ENCODE measurements at regions of chr1 and their contacts with region 1.

Region 1: DNA sequence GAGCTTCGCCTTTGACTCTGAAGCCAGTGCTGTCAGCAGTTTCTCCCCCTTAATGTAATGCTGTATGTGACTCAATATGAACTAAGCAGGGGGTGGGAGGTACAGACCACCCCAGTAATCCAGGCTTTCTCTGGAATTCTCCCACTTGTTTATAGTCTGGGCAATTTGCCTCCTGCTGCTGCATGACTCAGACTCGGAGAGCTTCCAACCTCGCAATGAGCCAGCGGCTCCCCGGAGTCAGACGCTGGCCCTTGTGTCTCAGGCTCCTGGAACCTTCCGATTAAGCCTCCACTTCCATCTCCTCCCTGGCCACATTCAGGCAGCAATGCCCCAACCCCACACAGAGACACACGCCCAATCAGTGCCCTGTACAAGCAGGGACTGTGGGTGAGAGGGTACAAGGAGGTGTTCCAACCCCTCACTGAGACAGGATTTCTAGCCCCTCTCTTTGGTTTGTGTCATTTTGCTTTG is 471.7 kb upstream of the VAMP3 start:
- DNase-seq: peak; percentile 70
- H3K4me3 ChIP-seq: no peak overlapping the region
- H3K27ac ChIP-seq: no peak overlapping the region
- H3K4me1 ChIP-seq: peaks cover 15% of the 10 kb centered on the region
- H3K27me3 ChIP-seq: no peaks in the 10 kb centered on the region
- CTCF ChIP-seq: no peak

Region 2: DNA sequence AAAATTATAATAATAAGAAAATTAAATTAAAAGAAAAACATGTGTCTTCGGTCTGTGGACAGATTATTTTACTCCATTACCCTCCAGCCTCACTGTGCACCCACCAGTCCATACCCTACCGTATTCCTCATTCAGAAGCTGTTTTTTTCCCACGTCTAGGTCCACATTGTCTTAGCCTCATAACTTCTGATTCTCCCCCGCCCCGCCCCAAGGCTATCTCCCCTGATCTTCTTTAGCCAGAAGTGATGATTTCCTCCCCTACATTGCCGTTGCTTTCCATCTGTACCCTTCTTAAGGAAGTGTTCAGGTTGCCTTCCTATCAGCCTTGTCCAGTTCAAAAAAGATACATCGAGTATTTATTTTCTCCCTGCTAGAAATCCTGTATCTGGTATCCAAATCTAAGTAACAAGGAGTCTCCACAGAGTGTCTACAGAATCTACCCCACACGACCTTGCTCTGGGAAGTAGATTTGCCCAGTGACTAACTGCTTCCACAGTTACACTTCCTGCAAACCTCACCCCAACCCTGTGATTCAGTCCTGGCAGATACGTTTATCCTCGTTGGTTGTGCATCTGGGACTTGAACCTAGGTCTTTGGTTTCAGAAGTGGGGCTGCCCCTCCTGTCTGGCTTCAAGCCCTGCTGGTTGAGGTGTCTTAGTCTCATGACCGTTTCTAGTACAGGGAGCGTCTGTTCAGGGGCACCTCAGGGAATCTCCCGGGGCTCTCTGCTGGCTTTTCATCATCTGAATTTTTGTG is 43.9 kb before region 1 on chr1:
- CTCF ChIA-PET with region 1: no interaction called
- dilution Hi-C with region 1: loop called (anchors 5 kb)
- in situ Hi-C with region 1: no loop called
- intact Hi-C with region 1: no loop called
- DNase-seq: no peak
- H3K4me3 ChIP-seq: no peak overlapping the region
- H3K27ac ChIP-seq: no peak overlapping the region
- H3K4me1 ChIP-seq: no peaks in the 10 kb centered on the region
- H3K27me3 ChIP-seq: no peaks in the 10 kb centered on the region
- CTCF ChIP-seq: no peak

Region 3: GRCh38 chr1:7281821-7282220 is 17.5 kb before region 1 on chr1:
- CTCF ChIA-PET with region 1: no interaction called
- dilution Hi-C with region 1: no loop called
- in situ Hi-C with region 1: no loop called
- intact Hi-C with region 1: no loop called
- DNase-seq: peak; percentile 50
- H3K4me3 ChIP-seq: no peak overlapping the region
- H3K27ac ChIP-seq: no peak overlapping the region
- H3K4me1 ChIP-seq: peaks cover 11% of the 10 kb centered on the region
- H3K27me3 ChIP-seq: no peaks in the 10 kb centered on the region
- CTCF ChIP-seq: no peak

Region 4: GRCh38 chr1:7334475-7335035 is 35.2 kb after region 1 on chr1:
- CTCF ChIA-PET with region 1: no interaction called
- dilution Hi-C with region 1: loop called (anchors 5 kb)
- in situ Hi-C with region 1: no loop called
- intact Hi-C with region 1: no loop called
- DNase-seq: peak; percentile 88
- H3K4me3 ChIP-seq: no peak overlapping the region
- H3K27ac ChIP-seq: no peak overlapping the region
- H3K4me1 ChIP-seq: peaks cover 21% of the 10 kb centered on the region
- H3K27me3 ChIP-seq: no peaks in the 10 kb centered on the region
- CTCF ChIP-seq: no peak

Region 5: DNA sequence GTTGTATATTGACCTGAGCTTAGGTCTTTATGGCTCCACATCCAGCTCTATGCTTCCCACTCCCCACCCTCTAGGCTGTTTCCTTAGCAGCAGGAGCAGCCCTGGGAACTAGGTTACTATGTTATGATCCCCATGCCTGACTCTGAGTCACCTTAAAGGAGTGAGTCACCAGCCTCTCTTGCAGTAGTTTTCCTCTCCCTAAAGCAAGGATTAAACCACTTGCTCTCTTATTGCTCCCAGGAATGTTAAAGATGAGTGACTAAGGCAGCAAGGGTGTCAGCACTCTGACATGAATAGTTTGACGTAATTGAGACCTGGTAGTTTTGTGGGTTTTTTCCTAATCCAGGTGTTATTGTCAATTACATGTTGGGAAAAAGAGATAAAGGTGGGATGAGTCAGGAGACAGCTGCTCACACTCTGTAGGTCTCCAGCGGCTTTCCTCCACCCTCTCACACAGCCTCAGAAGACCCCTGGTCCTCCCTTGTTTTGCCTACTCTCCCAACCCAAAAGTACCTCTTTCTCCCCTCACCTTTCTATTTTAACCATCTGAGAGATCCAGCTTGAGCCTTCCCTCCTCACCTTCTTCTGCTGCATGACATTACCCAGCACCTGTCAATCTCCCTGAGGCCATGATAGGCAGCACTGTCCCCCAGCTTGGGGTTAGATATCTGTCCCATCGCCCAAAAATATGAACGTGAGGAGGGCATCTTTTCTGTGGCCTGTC is 102.6 kb after region 1 on chr1:
- CTCF ChIA-PET with region 1: no interaction called
- dilution Hi-C with region 1: no loop called
- in situ Hi-C with region 1: no loop called
- intact Hi-C with region 1: no loop called
- DNase-seq: peak; percentile 99
- H3K4me3 ChIP-seq: no peak overlapping the region
- H3K27ac ChIP-seq: peak overlapping the region; percentile 64
- H3K4me1 ChIP-seq: peaks cover 11% of the 10 kb centered on the region
- H3K27me3 ChIP-seq: no peaks in the 10 kb centered on the region
- CTCF ChIP-seq: no peak

Region 6: GRCh38 chr1:7454052-7454815 is 154.9 kb after region 1 on chr1:
- CTCF ChIA-PET with region 1: no interaction called
- dilution Hi-C with region 1: no loop called
- in situ Hi-C with region 1: no loop called
- intact Hi-C with region 1: no loop called
- DNase-seq: no peak
- H3K4me3 ChIP-seq: no peak overlapping the region
- H3K27ac ChIP-seq: no peak overlapping the region
- H3K4me1 ChIP-seq: peaks cover 9% of the 10 kb centered on the region
- H3K27me3 ChIP-seq: no peaks in the 10 kb centered on the region
- CTCF ChIP-seq: peak; percentile 7 to 33

Measured in mammary epithelial cell (primary cell).